PC-3 (cell line): ENCODE measurements at regions of chr19 and their contacts with region 1.

Region 1: GRCh38 chr19:19618219-19619051 is at the start of gene PBX4:
- DNase-seq: peak; percentile 94
- ATAC-seq: peak; percentile 92
- H3K4me3 ChIP-seq: peak within 1 kb of the TSS; percentile 79
- H3K27ac ChIP-seq: no peak within 1 kb of the TSS
- H3K4me1 ChIP-seq: peaks cover 44% of the 10 kb centered on the region
- H3K27me3 ChIP-seq: no peaks in the 10 kb centered on the region
- CTCF ChIP-seq: no peak
- total RNA-seq, gene PBX4: 6.9 TPM in 2 replicates

Region 2: GRCh38 chr19:18969899-18970298 is 648.5 kb before region 1 on chr19:
- CTCF ChIA-PET with region 1: no interaction called
- POLR2A ChIA-PET with region 1: interaction called, 16 read pairs
- intact Hi-C with region 1: no loop called
- DNase-seq: no peak
- ATAC-seq: peak; percentile 18
- H3K4me3 ChIP-seq: no peak overlapping the region
- H3K27ac ChIP-seq: peak overlapping the region; percentile 88
- H3K4me1 ChIP-seq: peaks cover 29% of the 10 kb centered on the region
- H3K27me3 ChIP-seq: no peaks in the 10 kb centered on the region
- CTCF ChIP-seq: no peak

Region 3: GRCh38 chr19:19349365-19349905 is 269.0 kb before region 1 on chr19:
- CTCF ChIA-PET with region 1: no interaction called
- POLR2A ChIA-PET with region 1: no interaction called
- intact Hi-C with region 1: no loop called
- DNase-seq: no peak
- ATAC-seq: no peak
- H3K4me3 ChIP-seq: no peak overlapping the region
- H3K27ac ChIP-seq: no peak overlapping the region
- H3K4me1 ChIP-seq: no peaks in the 10 kb centered on the region
- H3K27me3 ChIP-seq: no peaks in the 10 kb centered on the region
- CTCF ChIP-seq: no peak

Region 4: GRCh38 chr19:19645233-19645870 is 26.9 kb after region 1 on chr19:
- CTCF ChIA-PET with region 1: no interaction called
- POLR2A ChIA-PET with region 1: no interaction called
- intact Hi-C with region 1: no loop called
- DNase-seq: no peak
- ATAC-seq: no peak
- H3K4me3 ChIP-seq: no peak overlapping the region
- H3K27ac ChIP-seq: no peak overlapping the region
- H3K4me1 ChIP-seq: peaks cover 3% of the 10 kb centered on the region; the same call in 1 of the 2 replicates
- H3K27me3 ChIP-seq: no peaks in the 10 kb centered on the region
- CTCF ChIP-seq: no peak